ENCODE measurements at regions of chr22 and their contacts with region 1.

Region 1: DNA sequence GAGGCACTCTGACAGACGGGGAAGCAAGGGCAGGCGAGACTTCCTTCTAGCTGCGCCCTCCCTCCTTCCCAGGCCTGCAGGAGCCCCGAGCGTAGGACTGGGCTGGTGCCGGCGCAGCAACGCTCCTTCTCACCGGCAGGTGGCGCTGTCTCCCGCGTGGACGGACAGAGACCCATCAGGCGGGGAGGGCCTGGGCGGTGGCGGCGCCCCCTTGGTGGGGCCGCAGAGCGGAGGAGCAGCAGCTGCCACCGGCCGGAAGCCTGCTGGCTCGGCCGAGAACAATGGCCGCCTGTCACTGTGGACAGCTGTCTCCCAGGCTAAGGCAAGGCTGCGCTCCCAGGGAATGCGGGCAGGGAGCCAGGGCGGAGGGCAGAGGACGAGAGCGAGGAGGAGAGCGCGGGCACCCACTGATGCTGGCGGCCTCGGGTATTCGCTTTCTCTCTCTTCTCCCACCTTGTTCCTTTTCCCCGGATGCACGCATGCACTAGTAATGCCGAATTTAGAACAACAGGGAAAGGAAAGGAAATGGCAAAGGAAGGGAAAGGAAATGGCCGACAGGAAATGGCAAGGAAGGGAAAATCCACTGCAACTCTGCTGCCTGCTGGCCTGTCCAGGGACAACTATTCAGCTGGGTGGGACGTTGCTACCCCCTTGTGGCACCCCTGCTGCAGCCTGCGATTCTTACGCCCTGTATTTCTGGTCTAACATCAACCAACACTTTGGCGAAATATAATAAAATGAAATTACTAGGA is 14.4 kb downstream of the PPM1F start:
- DNase-seq: peak; percentile 93
- ATAC-seq: peak; percentile 96
- H3K4me3 Mint-ChIP-seq: peak overlapping the region; percentile 77
- H3K27ac Mint-ChIP-seq: peak overlapping the region; percentile 90
- H3K4me1 Mint-ChIP-seq: peaks cover 39% of the 10 kb centered on the region
- H3K27me3 Mint-ChIP-seq: no peaks in the 10 kb centered on the region
- CTCF ChIP-seq: peak; percentile 99

Region 2: DNA sequence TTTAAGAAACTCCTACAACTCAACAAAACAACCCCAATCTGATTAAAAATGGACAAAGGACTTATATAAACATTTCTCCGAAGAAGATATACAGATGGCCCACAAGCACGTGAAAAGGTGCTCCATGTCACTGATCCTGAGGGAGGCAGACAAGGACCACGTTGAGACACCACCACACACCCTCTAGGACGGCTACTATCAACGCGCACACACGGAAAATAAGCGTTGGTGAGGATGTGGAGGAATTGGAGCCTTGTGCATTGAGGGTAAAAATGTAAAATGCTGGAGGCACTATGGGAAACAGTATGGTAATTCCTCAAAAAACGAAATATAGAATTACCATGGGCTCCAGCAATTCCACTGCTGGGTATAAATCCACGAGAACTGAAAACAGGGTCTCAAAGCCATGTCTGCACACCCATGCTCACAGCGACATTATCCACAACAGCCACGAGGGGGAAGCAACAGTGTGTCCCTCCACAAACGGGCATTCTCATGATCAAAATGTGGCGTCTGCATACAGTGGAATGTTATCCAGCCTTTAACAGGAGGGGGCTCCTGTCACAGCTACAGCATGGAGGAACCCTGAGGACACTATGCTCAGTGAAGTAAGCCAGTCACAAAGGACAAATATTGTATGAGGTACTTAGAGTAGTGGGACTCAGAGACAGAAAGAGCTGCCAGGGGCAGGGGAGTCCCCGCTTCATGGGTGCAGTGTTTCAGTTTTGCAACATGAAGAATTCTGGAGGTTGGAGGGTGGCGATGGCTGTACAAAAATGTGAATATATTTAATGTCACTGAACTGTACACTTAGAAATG is 225.1 kb before region 1 on chr22:
- CTCF ChIA-PET with region 1: interaction called, 5 read pairs
- POLR2A ChIA-PET with region 1: no interaction called
- intact Hi-C with region 1: loop called (anchors 5 kb)
- DNase-seq: peak; percentile 76
- ATAC-seq: peak; percentile 94
- H3K4me3 Mint-ChIP-seq: no peak overlapping the region
- H3K27ac Mint-ChIP-seq: no peak overlapping the region
- H3K4me1 Mint-ChIP-seq: peaks cover 7% of the 10 kb centered on the region
- H3K27me3 Mint-ChIP-seq: no peaks in the 10 kb centered on the region
- CTCF ChIP-seq: peak; percentile 92

Region 3: GRCh38 chr22:21735200-21736076 is 202.8 kb before region 1 on chr22 and contains the start of gene YPEL1:
- CTCF ChIA-PET with region 1: interaction called, 5 read pairs
- POLR2A ChIA-PET with region 1: no interaction called
- intact Hi-C with region 1: loop called (anchors 10 kb)
- DNase-seq: peak; percentile 93
- ATAC-seq: peak; percentile 92
- H3K4me3 Mint-ChIP-seq: peak within 1 kb of the TSS; percentile 79
- H3K27ac Mint-ChIP-seq: peak within 1 kb of the TSS; percentile 60
- H3K4me1 Mint-ChIP-seq: peaks cover 12% of the 10 kb centered on the region
- H3K27me3 Mint-ChIP-seq: no peaks in the 10 kb centered on the region
- CTCF ChIP-seq: no peak
- total RNA-seq, gene YPEL1: 0.99 to 1.2 TPM

Region 4: DNA sequence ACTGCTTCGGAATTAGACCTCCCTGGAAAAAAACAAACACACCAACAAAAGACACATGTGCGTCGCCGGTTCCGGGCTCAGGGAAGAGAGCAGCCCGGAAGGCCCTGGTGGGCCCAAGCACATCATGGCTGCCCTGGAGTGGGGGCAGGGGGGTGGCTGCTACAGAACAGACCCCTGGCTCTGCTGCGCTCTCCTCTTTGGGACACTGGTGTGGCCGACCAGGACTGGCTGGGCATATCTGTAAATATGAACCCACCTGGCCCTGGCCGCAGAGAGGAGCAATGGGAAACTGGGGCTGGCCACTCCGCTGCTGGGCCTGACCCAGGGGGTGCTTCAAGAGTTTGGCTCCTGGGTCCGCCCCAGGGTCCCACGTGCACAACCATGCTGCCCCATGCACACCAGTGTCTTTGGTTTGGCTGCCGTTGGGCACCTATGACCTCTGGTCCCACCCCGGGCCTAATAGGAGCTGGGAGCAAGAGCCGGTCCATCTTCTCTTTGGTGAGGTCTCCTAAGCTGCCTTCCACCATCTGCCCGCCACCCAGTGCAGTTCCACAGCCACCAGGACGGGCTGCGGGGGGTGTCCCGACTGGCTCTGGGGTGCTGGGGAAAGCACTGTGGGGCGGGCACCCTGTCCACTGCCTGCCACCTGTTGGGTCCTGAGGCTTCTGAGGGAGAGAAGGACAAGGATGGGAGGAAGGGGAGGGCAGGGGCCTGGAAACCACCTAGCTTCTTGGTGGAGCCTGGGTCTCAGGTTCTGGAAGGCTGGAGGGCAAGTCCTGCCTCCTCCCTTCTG is 15.7 kb before region 1 on chr22:
- CTCF ChIA-PET with region 1: interaction called, 10 read pairs
- POLR2A ChIA-PET with region 1: no interaction called
- intact Hi-C with region 1: no loop called
- DNase-seq: no peak
- ATAC-seq: no peak
- H3K4me3 Mint-ChIP-seq: no peak overlapping the region
- H3K27ac Mint-ChIP-seq: no peak overlapping the region
- H3K4me1 Mint-ChIP-seq: no peaks in the 10 kb centered on the region
- H3K27me3 Mint-ChIP-seq: no peaks in the 10 kb centered on the region
- CTCF ChIP-seq: no peak

Region 5: DNA sequence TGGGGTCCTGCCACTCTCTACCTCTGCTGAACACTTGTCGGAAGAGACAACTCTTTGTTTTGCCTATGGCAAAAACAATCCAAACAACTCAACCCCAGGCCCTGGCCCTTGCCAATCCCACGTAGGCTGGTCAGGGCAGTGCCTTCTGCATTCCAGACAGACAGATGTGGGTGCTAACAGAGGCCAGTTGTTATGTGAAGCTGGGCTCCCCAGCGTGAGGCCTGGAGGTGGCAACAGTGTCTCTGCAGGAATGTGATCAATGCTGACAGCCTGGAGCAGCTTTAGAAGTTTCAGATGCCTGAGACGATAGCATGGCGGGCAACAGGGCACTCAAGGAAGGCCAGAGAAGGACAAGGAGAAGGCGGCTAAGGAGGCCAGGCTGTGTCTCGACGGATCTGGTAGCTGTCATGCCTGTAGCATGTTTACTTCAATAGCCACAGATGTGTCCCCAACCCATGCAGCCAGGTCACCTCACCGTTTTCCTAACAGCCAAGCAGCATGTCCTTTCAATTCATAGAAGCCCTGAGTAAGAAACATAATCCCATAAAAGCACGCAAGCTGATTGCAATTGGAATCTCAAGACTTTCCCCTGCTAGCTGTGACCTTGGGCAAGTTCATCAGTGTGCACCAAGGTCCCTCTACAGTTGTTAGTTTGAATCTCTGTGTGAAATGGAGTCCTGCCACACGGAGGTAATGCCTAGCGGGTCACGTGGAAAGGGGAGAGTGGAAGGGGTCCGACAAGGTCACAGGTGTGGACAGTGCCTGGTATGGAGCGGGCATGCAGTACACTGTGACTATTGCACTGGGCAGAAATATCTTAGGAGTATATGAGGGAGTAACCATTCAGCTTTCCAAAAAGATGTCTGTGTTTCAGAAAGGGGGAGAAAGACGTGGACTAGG is 28.6 kb after region 1 on chr22:
- CTCF ChIA-PET with region 1: interaction called, 12 read pairs
- POLR2A ChIA-PET with region 1: interaction called, 3 read pairs
- intact Hi-C with region 1: no loop called
- DNase-seq: no peak
- ATAC-seq: no peak
- H3K4me3 Mint-ChIP-seq: no peak overlapping the region
- H3K27ac Mint-ChIP-seq: no peak overlapping the region
- H3K4me1 Mint-ChIP-seq: no peaks in the 10 kb centered on the region
- H3K27me3 Mint-ChIP-seq: no peaks in the 10 kb centered on the region
- CTCF ChIP-seq: no peak

Region 6: DNA sequence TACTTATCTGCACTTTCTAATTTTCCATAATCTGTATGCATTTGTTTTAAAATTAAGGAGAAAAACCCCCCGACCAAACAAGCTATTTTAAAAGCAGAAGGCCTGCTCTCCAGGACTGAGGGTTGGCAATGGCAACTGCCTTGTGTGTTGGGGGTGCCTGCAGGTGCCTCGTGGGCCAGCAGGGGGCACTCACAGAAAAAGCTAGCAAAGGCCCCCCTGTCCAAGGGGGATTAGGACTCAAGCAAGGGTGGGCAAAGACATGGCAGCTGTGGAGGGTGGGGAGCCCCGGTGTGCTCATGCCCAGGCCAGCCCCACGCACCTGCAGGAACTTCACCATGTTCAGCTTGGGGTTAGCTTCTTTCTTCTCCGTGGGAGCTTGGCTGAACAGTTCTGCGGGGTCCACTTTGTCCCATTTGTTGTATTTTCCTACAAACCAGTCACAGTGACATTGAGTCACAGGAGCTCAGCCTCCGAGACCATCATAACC is 34.1 kb after region 1 on chr22:
- CTCF ChIA-PET with region 1: interaction called, 12 read pairs
- POLR2A ChIA-PET with region 1: no interaction called
- intact Hi-C with region 1: no loop called
- DNase-seq: peak; percentile 70
- ATAC-seq: peak; percentile 88
- H3K4me3 Mint-ChIP-seq: no peak overlapping the region
- H3K27ac Mint-ChIP-seq: no peak overlapping the region
- H3K4me1 Mint-ChIP-seq: no peaks in the 10 kb centered on the region
- H3K27me3 Mint-ChIP-seq: no peaks in the 10 kb centered on the region
- CTCF ChIP-seq: peak; percentile 84

Region 7: DNA sequence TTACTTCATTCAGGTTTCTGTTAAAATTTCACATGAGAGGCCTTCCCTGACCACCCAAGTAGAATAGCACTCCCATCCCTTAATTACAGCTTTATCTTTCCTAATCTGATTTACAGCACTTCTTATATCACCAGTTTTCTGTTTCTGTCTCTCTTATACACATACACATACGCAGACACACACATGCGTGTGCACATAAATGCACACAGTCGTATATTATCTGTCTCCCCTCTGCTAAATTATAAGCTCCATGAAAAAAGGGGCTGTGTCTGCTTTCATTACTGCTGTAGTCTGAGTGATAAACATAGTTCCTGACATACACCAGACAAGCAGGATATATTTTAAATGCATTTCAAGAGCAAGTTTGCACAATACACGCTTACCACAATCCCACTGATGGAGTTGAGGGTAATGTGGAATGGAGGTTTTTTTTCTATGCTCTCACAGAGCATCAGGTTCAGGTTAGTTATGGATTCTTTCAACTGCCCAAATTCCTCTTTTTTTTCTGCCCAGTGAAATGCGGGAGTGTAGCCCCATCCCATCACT is 58.0 kb after region 1 on chr22:
- CTCF ChIA-PET with region 1: no interaction called
- POLR2A ChIA-PET with region 1: no interaction called
- intact Hi-C with region 1: no loop called
- DNase-seq: no peak
- ATAC-seq: no peak
- H3K4me3 Mint-ChIP-seq: no peak overlapping the region
- H3K27ac Mint-ChIP-seq: no peak overlapping the region
- H3K4me1 Mint-ChIP-seq: no peaks in the 10 kb centered on the region
- H3K27me3 Mint-ChIP-seq: peaks cover 2% of the 10 kb centered on the region
- CTCF ChIP-seq: no peak